ENCODE measurements at regions of chr14 and their contacts with region 1.

Region 1: DNA sequence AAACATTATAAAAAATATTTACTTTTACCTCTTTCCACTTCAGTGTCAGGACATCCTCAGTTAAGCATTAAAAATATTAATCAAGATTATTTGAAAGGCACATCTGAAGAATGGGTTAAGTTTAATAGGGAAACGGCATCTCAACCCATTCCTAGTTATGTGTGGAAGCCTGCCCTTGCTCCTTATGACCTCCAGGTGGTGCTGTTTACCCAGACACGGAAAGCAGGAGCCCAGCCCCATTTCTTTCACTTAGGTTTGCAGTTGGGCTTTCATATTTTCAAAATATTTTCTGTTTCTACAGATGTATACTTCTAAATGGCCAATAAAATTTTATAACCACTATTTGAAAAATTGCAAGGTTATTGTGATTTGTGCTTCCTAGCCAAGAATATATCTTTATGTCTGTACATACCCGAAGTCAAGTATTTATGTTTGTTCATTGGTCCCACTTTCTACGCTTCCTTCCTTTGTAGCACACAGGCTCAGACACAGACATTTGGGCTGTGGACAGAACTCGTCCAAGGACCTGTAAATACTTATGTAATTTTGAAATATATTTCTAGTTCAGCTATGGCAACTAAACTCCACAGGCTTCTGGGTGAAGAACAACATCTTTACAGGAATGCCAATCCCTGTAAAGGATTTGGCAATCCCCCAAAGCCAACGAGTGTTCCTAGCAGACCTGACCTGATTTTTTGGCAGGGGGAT is 247.1 kb downstream of the AKAP6 start:
- DNase-seq: peak; percentile 50
- H3K4me3 Mint-ChIP-seq: no peak overlapping the region
- H3K27ac Mint-ChIP-seq: no peak overlapping the region
- H3K4me1 Mint-ChIP-seq: no peaks in the 10 kb centered on the region
- H3K27me3 Mint-ChIP-seq: peaks cover 5% of the 10 kb centered on the region

Region 2: GRCh38 chr14:32542507-32542906 is 33.7 kb before region 1 on chr14:
- CTCF ChIA-PET with region 1: no interaction called
- intact Hi-C with region 1: no loop called
- DNase-seq: no peak
- H3K4me3 Mint-ChIP-seq: no peak overlapping the region
- H3K27ac Mint-ChIP-seq: no peak overlapping the region
- H3K4me1 Mint-ChIP-seq: no peaks in the 10 kb centered on the region
- H3K27me3 Mint-ChIP-seq: no peaks in the 10 kb centered on the region

Region 3: GRCh38 chr14:32560209-32560857 is 15.9 kb before region 1 on chr14:
- CTCF ChIA-PET with region 1: interaction called, 17 read pairs
- intact Hi-C with region 1: no loop called
- DNase-seq: peak; percentile 64
- H3K4me3 Mint-ChIP-seq: no peak overlapping the region
- H3K27ac Mint-ChIP-seq: no peak overlapping the region
- H3K4me1 Mint-ChIP-seq: peaks cover 12% of the 10 kb centered on the region
- H3K27me3 Mint-ChIP-seq: no peaks in the 10 kb centered on the region

Region 4: GRCh38 chr14:32939254-32940065 is 363.2 kb after region 1 on chr14:
- CTCF ChIA-PET with region 1: no interaction called
- intact Hi-C with region 1: loop called (anchors 5 kb)
- DNase-seq: peak; percentile 60
- H3K4me3 Mint-ChIP-seq: peak overlapping the region; percentile 69
- H3K27ac Mint-ChIP-seq: no peak overlapping the region
- H3K4me1 Mint-ChIP-seq: peaks cover 11% of the 10 kb centered on the region
- H3K27me3 Mint-ChIP-seq: peaks cover 57% of the 10 kb centered on the region

Region 5: DNA sequence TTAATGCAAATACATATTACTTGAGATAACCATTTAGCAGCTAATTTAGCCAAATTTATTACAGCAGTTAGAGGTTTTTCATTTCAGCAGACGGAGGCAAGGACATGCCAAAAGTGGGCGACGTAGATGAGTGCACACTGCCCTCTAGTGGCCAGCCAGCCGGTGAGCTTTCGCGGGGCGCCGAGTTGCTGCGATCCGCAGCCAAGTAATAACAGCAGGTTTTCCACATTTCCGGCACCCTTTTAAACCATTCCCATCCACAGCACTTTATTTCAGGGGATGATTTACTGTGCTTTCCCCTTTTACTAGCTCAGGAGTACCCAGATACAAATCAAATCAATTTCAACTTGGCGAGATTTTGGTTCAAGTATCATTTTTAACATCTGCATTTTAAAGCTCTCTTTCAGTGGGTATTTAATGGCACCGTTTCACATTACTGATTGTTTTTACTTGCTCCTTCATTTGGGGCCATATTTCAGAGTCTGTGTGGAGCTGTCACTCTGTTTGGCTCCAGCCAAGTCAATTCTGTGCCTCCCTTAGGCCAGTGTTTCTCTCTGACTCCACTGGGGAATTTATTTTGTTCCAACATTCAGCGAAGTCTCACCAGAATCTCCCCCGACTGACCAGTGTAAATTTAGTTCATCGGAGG is 1216.6 kb after region 1 on chr14:
- CTCF ChIA-PET with region 1: interaction called, 7 read pairs
- intact Hi-C with region 1: loop called (anchors 1 kb)
- DNase-seq: peak; percentile 80
- H3K4me3 Mint-ChIP-seq: no peak overlapping the region
- H3K27ac Mint-ChIP-seq: no peak overlapping the region
- H3K4me1 Mint-ChIP-seq: peaks cover 8% of the 10 kb centered on the region
- H3K27me3 Mint-ChIP-seq: peaks cover 20% of the 10 kb centered on the region

Region 6: DNA sequence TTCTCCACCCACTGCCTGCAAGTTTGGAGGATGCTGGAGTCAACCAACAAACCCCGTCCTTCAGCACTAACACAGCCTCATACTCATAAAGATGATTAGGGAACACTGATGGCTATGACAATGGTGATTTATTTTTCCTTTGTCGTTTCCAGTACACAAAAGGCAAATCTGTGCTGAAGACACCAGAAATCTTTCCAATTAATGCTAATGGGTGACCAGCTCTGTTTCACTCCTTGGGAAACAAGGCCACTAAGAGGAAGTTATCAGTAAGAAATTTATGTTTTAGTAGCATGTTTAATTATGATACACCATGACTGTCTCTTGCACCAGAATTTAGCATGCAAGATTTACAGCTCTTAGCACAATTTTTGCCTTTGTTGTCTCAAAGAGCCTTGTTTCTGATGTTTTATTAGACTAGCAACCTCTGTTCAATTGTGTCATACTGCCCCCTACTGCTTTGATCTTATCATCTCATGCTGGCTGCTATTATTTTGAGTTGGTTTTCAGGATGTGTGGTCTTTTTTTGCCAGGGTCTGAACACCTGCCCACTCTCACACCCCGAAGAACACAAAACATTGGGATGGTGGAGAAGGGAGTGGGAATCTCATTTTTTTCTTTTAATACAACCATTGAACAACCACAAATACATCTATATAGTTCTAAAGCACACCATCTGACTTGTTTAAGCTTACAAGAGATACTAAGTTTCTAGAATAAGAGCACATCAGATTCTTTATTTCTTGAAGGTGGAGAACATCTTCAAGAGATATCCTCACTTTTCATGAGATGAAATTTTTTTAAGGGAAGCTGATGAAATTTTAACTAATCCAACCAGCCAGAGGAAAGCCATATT is 1724.9 kb after region 1 on chr14:
- CTCF ChIA-PET with region 1: no interaction called
- intact Hi-C with region 1: loop called (anchors 1 kb)
- DNase-seq: peak; percentile 13
- H3K4me3 Mint-ChIP-seq: no peak overlapping the region
- H3K27ac Mint-ChIP-seq: no peak overlapping the region
- H3K4me1 Mint-ChIP-seq: no peaks in the 10 kb centered on the region
- H3K27me3 Mint-ChIP-seq: no peaks in the 10 kb centered on the region